Body of pancreas (tissue), 4 donors: ENCODE measurements at regions of chr17 and their contacts with region 1.

Region 1: DNA sequence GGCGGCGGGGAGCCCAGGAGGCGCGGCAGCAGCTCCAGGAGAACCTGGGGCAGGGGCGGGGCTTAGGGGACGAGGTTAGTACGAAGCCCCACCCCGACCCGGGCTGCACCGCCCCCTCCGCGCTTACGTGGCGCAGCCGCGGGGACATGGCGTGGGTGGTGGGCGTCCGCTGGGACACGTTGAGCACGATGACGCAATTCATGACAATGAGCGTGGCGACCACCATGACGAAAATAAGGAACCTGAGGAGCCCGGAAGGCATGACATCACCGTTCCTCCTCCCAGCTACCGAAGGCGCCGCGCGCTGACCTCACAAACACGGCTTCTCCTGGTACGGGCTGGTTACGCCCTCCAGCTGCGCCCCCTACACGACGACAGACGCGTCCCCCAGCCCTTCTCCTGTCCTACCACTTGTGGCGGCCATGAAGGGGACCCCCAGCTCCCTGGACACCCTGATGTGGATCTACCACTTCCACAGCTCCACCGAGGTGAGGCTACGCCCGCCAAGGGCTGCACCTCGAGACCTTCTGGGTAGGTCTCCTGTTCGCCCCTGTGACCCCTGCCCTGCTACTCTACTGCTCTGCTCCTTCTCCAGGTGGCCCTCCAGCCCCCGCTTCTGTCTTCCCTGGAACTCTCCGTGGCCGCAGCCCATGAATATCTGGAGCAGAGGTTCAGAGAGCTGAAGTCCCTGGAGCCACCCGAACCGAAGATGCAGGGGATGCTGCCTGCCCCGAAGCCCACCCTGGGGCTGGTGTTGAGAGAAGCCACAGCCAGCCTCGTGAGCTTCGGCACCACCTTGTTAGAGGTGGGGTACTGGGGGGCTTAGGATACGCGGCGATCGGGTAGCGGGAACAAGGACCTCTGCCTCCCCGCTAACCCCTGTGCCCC is at the start of gene C17orf107:
- DNase-seq: peak; percentile 88 to 94 (median 92)
- ATAC-seq: peak; percentile 78
- H3K4me3 ChIP-seq: peak within 1 kb of the TSS; percentile 13 to 48
- H3K27ac ChIP-seq: peak within 1 kb of the TSS in 3 of 4 donors; percentile 4 to 47 (median 46)
- H3K4me1 ChIP-seq: peaks cover 45% of the 10 kb centered on the region
- H3K27me3 ChIP-seq: no peaks in the 10 kb centered on the region
- CTCF ChIP-seq: no peak
- POLR2A ChIP-seq: peak; percentile 9 to 54 (median 44)
- total RNA-seq, gene C17orf107: 5.2 to 11.9 TPM

Region 2: GRCh38 chr17:4709794-4710692 is 189.5 kb before region 1 on chr17 and contains the start of gene ARRB2:
- intact Hi-C with region 1: loop called (anchors 10 kb)
- DNase-seq: peak; percentile 96 to 99 (median 98)
- ATAC-seq: peak; percentile 90
- H3K4me3 ChIP-seq: peak within 1 kb of the TSS; percentile 35 to 46
- H3K27ac ChIP-seq: peak within 1 kb of the TSS; percentile 73 to 88 (median 84)
- H3K4me1 ChIP-seq: peaks cover 19% of the 10 kb centered on the region
- H3K27me3 ChIP-seq: no peaks in the 10 kb centered on the region
- CTCF ChIP-seq: peak; percentile 39 to 95 (median 86)
- POLR2A ChIP-seq: peak in 2 of 3 donors; percentile 9 to 65
- total RNA-seq, gene ARRB2: 12.5 to 13.2 TPM